Cardiac septum (tissue), 1 donor: ENCODE measurements at regions of chr10 and their contacts with region 1.

Region 1: DNA sequence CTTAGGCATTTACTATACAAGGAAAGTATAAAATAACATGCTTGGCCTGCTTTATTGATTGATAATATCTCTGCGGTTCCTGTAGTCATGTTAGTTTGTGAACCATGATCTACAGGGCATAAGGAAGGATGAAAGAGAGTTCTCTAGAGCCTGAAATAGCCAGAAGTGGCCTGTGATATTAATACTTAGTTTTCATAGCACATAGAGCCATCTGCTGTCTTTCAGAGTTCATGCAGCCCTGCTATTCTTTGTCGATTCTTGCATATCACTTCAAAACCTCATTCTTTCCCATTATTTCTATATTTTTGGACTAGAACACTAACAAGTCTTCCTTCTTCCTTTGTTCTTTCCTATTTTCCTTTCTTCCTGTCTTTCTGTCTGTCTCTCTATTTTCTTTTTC is 26.4 kb upstream of the PRKG1 start:
- DNase-seq: no peak

Region 2: DNA sequence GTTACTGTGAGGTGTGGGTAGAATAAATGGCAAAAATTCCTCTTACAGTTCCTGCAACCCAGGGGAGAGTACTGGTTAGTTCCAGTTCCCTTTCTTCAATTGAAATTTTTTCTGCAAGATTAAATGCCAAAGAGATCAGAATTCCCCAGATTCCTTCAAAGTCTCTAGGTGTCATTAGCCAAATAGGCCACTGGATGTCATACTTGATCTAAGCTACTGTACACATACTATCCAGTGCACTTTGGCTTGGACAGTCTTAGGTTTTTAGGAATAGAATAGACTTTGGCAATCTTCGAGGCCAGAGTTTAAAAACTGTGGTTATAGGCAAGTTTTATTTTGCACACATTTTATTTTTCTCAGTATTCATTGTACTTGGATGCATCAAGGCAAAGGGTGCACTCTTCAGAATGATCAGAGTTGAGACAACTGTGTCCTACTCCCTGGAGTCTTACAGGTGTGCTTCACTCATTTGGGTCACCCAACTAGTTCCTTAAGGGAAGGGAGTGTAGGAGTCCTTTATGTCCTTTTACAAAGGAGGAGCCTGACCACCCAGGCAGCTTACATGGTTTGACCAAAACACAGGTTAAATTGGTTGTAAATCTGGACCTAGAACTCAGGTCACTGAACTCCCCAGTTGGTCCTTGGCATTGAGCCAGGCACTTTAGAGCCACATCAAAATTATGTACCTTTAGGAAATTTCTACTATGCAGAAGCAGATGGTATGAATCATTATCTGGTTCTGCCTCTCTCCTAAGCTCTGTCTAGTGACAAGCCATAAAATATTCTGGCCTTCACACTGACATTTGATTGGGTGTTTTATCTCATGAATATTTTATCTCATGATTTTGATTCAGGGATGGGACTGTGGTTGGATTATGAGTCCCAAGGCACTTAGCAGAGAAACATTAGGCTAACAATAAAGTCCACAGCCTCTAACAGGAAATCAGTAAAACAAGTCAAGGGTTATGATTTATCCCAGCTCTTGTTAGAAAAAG is 258.6 kb before region 1 on chr10:
- intact Hi-C with region 1: loop called (anchors 5 kb)
- DNase-seq: no peak

Region 3: GRCh38 chr10:51010977-51011376 is 36.9 kb before region 1 on chr10:
- intact Hi-C with region 1: loop called (anchors 5 kb)
- DNase-seq: no peak

Region 4: GRCh38 chr10:51124852-51125251 is 77.0 kb after region 1 on chr10:
- intact Hi-C with region 1: no loop called
- DNase-seq: no peak